OCI-LY7 (cell line): ENCODE measurements at regions of chr3 and their contacts with region 1.

Region 1: DNA sequence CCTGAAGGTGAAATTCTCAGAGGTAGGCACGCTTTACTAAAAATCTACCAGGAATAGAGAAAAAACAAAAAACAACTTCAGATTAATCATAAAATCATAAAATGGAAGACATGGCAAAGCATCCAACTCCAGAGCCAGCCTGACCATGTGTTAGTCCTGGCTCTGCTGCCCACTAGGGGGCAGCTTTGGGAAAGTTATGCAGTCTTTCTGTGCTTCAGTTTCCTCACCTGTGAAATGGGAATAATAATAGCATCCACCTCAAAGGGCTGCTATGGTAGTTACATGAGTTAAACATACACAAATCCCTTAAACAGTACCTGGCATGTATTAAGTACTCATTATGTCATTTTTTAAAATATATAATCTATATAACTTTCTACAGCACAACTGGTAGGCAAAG is 52.3 kb downstream of the WNT5A start:
- DNase-seq: peak; percentile 71
- H3K4me3 ChIP-seq: no peak overlapping the region
- H3K27ac ChIP-seq: no peak overlapping the region
- H3K4me1 ChIP-seq: no peaks in the 10 kb centered on the region
- CTCF ChIP-seq: peak; percentile 95

Region 2: DNA sequence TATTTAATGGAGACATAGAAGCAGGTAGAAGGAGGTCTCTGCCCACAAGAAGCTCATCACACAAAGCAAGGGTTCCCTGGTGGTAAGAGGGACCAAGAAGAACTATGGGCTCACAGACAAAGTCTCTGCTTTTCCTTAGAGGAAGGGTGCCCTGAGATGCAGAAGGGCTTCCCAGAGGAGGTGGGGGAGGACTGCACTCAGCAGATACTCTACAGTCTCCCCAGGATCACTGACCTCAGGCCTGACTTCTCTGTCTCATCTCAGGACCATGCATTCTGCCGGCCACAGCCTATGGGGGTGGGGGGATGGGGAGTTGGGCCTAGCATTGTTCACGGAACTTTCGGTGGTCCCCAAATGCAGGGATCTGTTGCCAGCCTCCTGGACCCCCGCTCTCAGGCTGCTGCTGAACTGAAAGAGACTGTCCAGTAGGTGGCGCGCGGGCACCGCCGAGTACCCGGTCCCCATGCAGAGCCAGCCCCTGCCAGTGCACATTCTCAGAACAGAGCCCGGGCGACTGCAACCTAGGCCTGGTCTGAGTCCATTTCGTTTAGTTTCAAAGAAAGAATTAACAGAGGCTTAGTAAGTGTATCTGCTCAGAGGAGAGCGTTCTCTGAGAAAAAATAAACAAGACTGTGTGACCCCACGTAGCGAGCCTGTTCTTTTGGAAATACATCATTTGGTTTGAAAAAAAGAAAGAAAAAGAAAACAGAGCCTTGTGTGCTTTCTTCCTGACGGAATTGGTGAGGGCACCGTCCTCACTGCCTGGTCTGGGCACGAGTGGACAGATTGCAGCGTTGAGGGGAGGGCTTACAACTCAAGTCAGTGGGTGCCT is 581.0 kb before region 1 on chr3:
- CTCF ChIA-PET with region 1: interaction called, 10 read pairs
- POLR2A ChIA-PET with region 1: no interaction called
- intact Hi-C with region 1: loop called (anchors 10 kb)
- DNase-seq: peak; percentile 60
- H3K4me3 ChIP-seq: no peak overlapping the region
- H3K27ac ChIP-seq: no peak overlapping the region
- H3K4me1 ChIP-seq: no peaks in the 10 kb centered on the region
- CTCF ChIP-seq: peak; percentile 90

Region 3: GRCh38 chr3:55765906-55766701 is 331.3 kb after region 1 on chr3:
- CTCF ChIA-PET with region 1: no interaction called
- POLR2A ChIA-PET with region 1: no interaction called
- intact Hi-C with region 1: no loop called
- DNase-seq: no peak
- H3K4me3 ChIP-seq: no peak overlapping the region
- H3K27ac ChIP-seq: no peak overlapping the region
- H3K4me1 ChIP-seq: no peaks in the 10 kb centered on the region
- CTCF ChIP-seq: no peak

Region 4: DNA sequence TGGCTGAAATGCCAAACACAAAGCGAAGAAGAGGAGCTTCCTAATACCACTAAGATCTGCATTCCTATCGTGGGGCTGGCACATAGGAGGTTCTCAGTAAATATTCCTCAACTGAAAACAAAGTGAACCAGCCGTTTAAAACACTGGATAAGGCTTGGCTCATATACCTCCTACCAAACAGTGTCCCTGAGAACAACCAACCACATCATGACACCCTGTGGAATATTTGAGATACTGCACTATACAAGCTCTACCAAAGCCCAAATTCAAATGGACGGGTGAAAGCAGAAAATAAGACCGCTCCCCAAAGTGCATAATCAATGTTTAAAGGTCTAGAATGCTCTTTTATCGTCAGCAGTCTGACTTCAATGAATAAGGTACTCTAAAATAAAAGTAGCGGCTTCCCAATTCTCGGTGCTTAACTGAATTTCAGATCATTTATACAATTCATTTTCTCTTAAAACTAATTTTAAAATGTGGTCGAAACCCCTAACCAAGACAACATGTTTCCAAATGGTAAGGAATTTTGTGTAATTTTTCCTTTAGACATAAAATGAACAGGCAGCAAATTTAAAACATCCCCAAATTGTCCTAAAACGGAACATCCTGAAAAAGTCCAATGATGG is 607.6 kb after region 1 on chr3:
- CTCF ChIA-PET with region 1: no interaction called
- POLR2A ChIA-PET with region 1: no interaction called
- intact Hi-C with region 1: loop called (anchors 10 kb)
- DNase-seq: peak; percentile 19
- H3K4me3 ChIP-seq: no peak overlapping the region
- H3K27ac ChIP-seq: no peak overlapping the region
- H3K4me1 ChIP-seq: no peaks in the 10 kb centered on the region
- CTCF ChIP-seq: peak; percentile 68

Region 5: DNA sequence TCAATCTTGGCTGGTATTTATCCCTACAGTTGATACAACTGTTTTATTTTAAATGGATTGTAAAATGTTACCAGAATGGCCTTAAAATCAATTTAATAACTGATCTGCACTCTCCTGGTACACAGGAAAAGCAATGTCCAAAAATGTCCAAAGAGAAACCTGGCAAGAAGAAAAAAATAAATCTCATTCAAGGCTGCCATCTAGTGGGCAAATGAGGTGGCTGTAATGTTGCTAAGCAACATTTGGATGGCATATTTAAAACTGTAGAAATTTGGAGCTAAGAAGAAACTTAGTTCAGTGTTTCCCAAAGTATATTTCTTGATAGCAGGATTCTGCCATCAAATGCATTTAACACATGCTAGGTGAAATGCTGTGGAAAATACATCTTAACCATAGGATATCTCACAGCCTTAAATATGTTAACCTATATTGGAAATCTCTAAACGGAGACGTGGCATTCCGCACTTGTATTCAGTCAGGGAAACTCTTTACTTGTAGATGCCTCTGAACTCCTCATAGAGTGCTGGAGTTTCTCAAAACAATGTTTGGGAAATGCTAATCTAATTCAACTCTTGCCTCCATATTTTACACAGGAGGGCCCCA is 816.7 kb after region 1 on chr3:
- CTCF ChIA-PET with region 1: no interaction called
- POLR2A ChIA-PET with region 1: no interaction called
- intact Hi-C with region 1: loop called (anchors 10 kb)
- DNase-seq: peak; percentile 53
- H3K4me3 ChIP-seq: no peak overlapping the region
- H3K27ac ChIP-seq: no peak overlapping the region
- H3K4me1 ChIP-seq: no peaks in the 10 kb centered on the region
- CTCF ChIP-seq: peak; percentile 97